MCF 10A (cell line): ENCODE measurements at regions of chr20 and their contacts with region 1.

Region 1: GRCh38 chr20:10636326-10636818 is 37.4 kb downstream of the JAG1 start:
- DNase-seq: peak; percentile 90
- H3K4me3 Mint-ChIP-seq: peak overlapping the region; percentile 29
- H3K27ac Mint-ChIP-seq: peak overlapping the region; percentile 85
- H3K4me1 Mint-ChIP-seq: peaks cover 44% of the 10 kb centered on the region
- H3K27me3 Mint-ChIP-seq: no peaks in the 10 kb centered on the region
- CTCF ChIP-seq: no peak

Region 2: DNA sequence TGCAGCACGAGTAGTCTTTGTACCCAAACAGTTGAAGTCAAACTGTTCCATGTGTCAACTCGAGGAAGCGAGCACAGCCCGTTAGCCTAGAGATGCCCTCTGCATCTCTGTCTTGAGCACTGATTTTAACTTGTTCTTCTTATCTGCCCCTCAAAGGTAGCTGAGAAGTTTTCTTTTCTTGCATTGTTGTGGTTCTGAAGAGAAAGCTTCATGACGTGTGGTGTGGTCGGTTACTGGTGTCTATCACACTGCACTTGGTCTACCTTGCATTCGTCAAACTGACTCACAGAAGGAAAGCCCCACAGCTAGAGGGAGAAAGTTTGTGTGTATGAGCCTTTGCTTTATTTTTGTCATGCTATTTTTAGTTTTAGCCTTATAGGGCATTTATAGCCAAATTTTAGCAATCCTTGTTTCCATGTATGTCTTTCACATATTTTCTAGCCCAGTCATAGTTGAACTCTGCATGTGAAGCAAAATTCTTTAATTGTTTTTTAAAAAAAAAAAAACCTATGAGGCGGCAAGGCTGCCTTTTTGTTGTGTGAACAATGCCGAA is 77.7 kb before region 1 on chr20:
- CTCF ChIA-PET with region 1: interaction called, 20 read pairs
- POLR2A ChIA-PET with region 1: interaction called, 36 read pairs
- intact Hi-C with region 1: no loop called
- DNase-seq: peak; percentile 90
- H3K4me3 Mint-ChIP-seq: peak overlapping the region; percentile 18
- H3K27ac Mint-ChIP-seq: peak overlapping the region; percentile 68
- H3K4me1 Mint-ChIP-seq: peaks cover 26% of the 10 kb centered on the region
- H3K27me3 Mint-ChIP-seq: no peaks in the 10 kb centered on the region
- CTCF ChIP-seq: no peak

Region 3: DNA sequence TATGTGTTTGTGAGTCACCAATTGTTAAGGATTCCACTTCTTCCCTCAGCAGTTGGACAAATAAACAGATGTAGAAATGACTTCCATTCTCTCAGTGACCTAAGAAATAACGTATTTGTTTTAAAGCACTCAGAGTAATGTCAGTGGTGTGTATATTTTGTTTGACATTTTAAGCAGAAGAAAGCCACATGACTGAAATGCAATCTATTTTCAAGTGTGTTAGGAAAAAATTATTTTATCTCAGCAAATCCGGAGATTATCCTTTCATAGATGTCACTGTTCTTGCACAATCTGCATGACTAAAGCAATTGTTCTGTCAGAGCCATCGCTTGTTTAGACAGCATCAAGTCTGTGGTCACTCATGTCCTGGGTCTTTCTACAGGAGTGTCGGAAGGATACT is 39.6 kb before region 1 on chr20:
- CTCF ChIA-PET with region 1: interaction called, 12 read pairs
- POLR2A ChIA-PET with region 1: interaction called, 33 read pairs
- intact Hi-C with region 1: no loop called
- DNase-seq: peak; percentile 88
- H3K4me3 Mint-ChIP-seq: peak overlapping the region; percentile 2
- H3K27ac Mint-ChIP-seq: peak overlapping the region; percentile 5
- H3K4me1 Mint-ChIP-seq: peaks cover 33% of the 10 kb centered on the region
- H3K27me3 Mint-ChIP-seq: no peaks in the 10 kb centered on the region
- CTCF ChIP-seq: no peak

Region 4: GRCh38 chr20:10619427-10619826 is 16.9 kb before region 1 on chr20:
- CTCF ChIA-PET with region 1: interaction called, 7 read pairs
- POLR2A ChIA-PET with region 1: interaction called, 27 read pairs
- intact Hi-C with region 1: no loop called
- DNase-seq: peak; percentile 92
- H3K4me3 Mint-ChIP-seq: peak overlapping the region; percentile 13
- H3K27ac Mint-ChIP-seq: peak overlapping the region; percentile 90
- H3K4me1 Mint-ChIP-seq: peaks cover 18% of the 10 kb centered on the region
- H3K27me3 Mint-ChIP-seq: no peaks in the 10 kb centered on the region
- CTCF ChIP-seq: no peak

Region 5: GRCh38 chr20:10654630-10655029 is 18.3 kb after region 1 on chr20:
- CTCF ChIA-PET with region 1: interaction called, 12 read pairs
- POLR2A ChIA-PET with region 1: interaction called, 12 read pairs
- intact Hi-C with region 1: no loop called
- DNase-seq: peak; percentile 78
- H3K4me3 Mint-ChIP-seq: no peak overlapping the region
- H3K27ac Mint-ChIP-seq: peak overlapping the region; percentile 88
- H3K4me1 Mint-ChIP-seq: peaks cover 16% of the 10 kb centered on the region
- H3K27me3 Mint-ChIP-seq: no peaks in the 10 kb centered on the region
- CTCF ChIP-seq: no peak

Region 6: GRCh38 chr20:10667077-10667401 is 30.7 kb after region 1 on chr20:
- CTCF ChIA-PET with region 1: interaction called, 7 read pairs
- POLR2A ChIA-PET with region 1: interaction called, 51 read pairs
- intact Hi-C with region 1: no loop called
- DNase-seq: peak; percentile 78
- H3K4me3 Mint-ChIP-seq: peak overlapping the region; percentile 33
- H3K27ac Mint-ChIP-seq: peak overlapping the region; percentile 68
- H3K4me1 Mint-ChIP-seq: peaks cover 46% of the 10 kb centered on the region
- H3K27me3 Mint-ChIP-seq: no peaks in the 10 kb centered on the region
- CTCF ChIP-seq: no peak

Region 7: GRCh38 chr20:10919396-10920140 is 283.2 kb after region 1 on chr20:
- CTCF ChIA-PET with region 1: no interaction called
- POLR2A ChIA-PET with region 1: no interaction called
- intact Hi-C with region 1: no loop called
- DNase-seq: peak; percentile 60
- H3K4me3 Mint-ChIP-seq: no peak overlapping the region
- H3K27ac Mint-ChIP-seq: peak overlapping the region; percentile 2
- H3K4me1 Mint-ChIP-seq: peaks cover 39% of the 10 kb centered on the region
- H3K27me3 Mint-ChIP-seq: no peaks in the 10 kb centered on the region
- CTCF ChIP-seq: no peak